Ovary (tissue), 10 donors: ENCODE measurements at regions of chr5 and their contacts with region 1.

Region 1: DNA sequence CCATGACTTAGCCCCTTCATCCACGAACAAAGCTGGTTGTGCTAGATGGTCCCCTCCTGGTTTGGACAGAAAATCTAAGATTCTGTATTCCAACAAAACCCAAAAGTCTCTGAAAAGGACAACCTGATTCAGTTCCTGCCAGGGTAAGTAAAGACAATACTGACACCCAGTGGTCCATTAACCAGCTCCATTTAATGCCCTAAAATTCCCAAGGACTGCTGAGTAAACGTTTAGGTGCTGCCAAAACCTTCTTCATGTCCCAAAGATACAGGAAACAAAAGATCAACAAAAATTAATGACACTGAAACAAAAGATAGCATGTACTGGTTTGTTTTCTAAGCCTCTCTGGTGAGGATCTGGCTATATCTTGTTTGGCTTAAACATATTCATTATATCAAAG is 25.3 kb upstream of the PPP1R2B start:
- DNase-seq: peak in 1 of 5 donors; percentile 10
- H3K4me3 ChIP-seq: no peak overlapping the region
- H3K27ac ChIP-seq: no peak overlapping the region
- H3K4me1 ChIP-seq: no peaks in the 10 kb centered on the region
- H3K27me3 ChIP-seq: no peaks in the 10 kb centered on the region
- CTCF ChIP-seq: peak; percentile 10 to 59 (median 16)
- EP300 ChIP-seq: no peak
- POLR2A ChIP-seq: no peak

Region 2: DNA sequence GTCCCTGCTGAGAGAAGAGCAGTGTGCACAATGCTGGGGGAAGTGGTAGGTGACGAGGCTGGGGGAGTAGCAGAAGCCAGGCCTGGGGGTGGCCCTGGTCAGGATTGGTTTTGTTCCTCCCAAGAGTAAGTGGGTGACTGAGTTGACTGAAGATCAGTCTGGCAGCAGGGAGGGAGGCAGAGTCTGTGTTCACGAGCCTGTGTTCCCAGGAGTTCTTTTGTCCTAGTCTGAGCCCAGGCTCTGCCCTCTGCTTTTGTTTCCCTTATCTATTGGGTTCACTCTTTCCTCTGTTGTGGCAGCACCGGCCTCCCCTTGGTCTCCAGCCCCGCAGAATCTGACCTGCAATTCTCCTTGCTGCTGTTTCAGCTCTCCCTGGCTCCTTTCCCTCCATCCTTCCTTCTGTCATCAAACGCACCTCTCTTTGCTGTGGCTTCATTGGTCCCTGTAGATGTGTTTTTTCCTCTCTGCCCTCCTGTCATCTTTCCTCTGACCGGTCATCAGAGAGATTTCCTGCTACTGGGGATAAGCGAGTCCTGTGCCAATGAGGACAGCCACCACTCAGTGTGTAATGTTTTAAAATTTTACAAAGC is 1203.9 kb before region 1 on chr5:
- intact Hi-C with region 1: loop called in 1 of 4 experiments (anchors 10 kb)
- DNase-seq: no peak
- H3K4me3 ChIP-seq: no peak overlapping the region
- H3K27ac ChIP-seq: no peak overlapping the region
- H3K4me1 ChIP-seq: no peaks in the 10 kb centered on the region
- H3K27me3 ChIP-seq: no peaks in the 10 kb centered on the region
- CTCF ChIP-seq: no peak
- EP300 ChIP-seq: no peak
- POLR2A ChIP-seq: no peak

Region 3: DNA sequence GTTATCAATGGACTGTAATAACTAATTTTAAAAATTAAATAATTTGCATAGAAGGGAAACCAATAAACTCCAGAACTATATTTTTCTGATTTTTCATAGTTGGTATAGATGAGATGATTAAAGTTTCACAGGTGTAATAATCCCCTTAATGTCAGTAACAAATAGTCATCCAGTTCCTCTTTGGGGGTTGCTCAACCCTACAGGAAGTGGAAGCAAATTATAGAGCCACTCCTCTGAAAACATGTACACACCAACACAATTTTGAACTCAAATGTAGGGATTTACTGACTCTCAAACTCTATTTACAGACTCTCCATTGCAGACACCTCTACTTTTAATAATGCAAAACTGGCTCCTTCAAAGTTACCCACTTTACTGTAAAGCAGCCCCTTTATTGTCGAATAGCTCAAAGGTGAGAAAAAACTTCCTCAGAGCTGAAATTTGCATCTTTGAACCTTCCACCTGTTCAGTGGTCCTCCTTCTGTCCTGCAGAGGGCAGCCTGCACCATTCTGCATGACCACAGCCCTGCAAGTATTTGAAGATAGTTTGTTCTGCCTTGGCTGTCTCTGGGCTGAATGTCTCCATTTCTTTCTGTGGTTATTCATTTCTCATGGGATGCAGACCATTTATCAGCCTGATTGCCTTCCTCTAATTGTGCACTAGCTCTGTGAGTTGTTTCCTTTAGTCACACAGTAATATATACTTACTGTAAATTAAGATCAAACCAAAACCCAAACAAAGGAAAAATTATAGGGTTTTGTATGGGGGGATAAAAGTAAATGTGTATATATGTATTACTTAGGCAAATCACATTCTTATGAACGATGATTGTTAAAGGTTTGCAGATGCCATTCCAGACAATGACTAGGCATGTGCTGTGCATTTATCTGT is 881.0 kb before region 1 on chr5:
- intact Hi-C with region 1: loop called in 1 of 4 experiments (anchors 10 kb)
- DNase-seq: peak; percentile 36 to 69 (median 46)
- H3K4me3 ChIP-seq: no peak overlapping the region
- H3K27ac ChIP-seq: no peak overlapping the region
- H3K4me1 ChIP-seq: no peaks in the 10 kb centered on the region
- H3K27me3 ChIP-seq: no peaks in the 10 kb centered on the region
- CTCF ChIP-seq: peak; percentile 29 to 49 (median 32)
- EP300 ChIP-seq: no peak
- POLR2A ChIP-seq: no peak

Region 4: DNA sequence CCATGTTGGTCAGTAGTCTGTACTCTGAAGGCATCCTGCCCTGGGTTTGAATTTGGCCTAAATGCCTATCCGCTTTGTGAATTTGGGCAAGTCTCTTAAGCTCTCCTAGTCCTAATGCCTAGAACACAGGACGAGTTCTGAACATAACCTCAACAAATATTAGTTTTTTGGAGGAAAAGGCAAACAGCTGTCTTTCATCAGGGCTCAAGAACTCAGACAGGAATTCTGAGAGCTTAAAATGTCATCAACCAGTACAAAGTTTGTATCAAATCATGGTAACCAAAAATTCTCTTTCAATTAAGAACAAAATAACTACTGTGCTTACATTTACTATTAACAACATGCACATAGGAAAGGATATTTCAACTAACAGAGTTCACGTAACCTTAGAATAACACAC is 157.2 kb before region 1 on chr5:
- intact Hi-C with region 1: no loop called
- DNase-seq: no peak
- H3K4me3 ChIP-seq: no peak overlapping the region
- H3K27ac ChIP-seq: no peak overlapping the region
- H3K4me1 ChIP-seq: no peaks in the 10 kb centered on the region
- H3K27me3 ChIP-seq: no peaks in the 10 kb centered on the region
- CTCF ChIP-seq: no peak
- EP300 ChIP-seq: no peak
- POLR2A ChIP-seq: no peak

Region 5: DNA sequence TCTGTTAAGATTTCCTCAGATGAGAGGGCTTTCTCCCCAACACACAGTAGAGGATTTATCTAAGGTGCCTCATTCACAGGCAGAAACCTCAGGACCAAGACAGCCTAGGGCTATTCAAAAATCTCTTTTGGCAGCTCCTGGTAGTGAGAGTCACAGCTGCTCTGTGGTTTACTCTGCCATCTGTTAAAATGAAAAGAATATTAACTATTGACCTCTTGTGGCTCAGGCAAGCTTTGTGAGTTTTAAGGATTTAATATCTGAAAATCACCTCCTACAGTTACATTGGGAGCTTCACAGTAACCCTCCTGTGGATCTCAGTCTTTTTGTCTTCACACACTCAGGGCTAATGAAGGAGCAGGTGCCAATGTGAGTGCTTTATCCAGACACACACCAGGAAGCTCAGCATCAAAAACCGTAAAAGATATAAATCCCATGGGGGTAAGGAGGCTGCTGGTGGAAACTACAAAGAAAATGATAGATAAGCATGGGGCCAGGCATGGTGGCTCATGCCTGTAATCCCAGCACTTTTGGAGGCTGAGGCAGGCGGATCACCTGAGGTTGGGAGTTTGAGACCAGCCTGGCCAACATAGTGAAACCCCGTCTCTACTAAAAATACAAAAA is 55.0 kb after region 1 on chr5:
- intact Hi-C with region 1: no loop called
- DNase-seq: no peak
- H3K4me3 ChIP-seq: no peak overlapping the region
- H3K27ac ChIP-seq: no peak overlapping the region
- H3K4me1 ChIP-seq: no peaks in the 10 kb centered on the region
- H3K27me3 ChIP-seq: no peaks in the 10 kb centered on the region
- CTCF ChIP-seq: no peak
- EP300 ChIP-seq: no peak
- POLR2A ChIP-seq: no peak

Region 6: DNA sequence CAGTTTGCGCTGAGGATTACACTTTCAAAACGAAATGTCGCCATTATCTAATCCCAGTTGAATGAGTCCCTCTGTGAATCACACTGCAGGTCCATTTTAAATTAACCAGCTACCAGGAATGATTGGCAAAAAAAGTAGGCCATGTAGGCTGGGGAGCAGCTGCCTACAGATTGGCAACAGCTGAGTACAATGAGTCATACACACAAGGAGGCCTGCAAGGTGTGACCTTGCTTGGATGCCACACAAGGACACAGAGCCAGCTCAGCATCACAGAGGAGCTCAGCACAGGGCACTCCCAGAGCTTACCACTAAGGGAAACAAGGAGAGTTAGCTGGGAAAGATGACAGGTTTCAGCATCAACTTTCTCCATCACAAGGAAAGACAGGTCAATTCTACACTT is 221.2 kb after region 1 on chr5:
- intact Hi-C with region 1: no loop called
- DNase-seq: no peak
- H3K4me3 ChIP-seq: no peak overlapping the region
- H3K27ac ChIP-seq: no peak overlapping the region
- H3K4me1 ChIP-seq: no peaks in the 10 kb centered on the region
- H3K27me3 ChIP-seq: no peaks in the 10 kb centered on the region
- CTCF ChIP-seq: no peak
- EP300 ChIP-seq: no peak
- POLR2A ChIP-seq: no peak